PC-9 (cell line): ENCODE measurements at regions of chr11 and their contacts with region 1.

Region 1: DNA sequence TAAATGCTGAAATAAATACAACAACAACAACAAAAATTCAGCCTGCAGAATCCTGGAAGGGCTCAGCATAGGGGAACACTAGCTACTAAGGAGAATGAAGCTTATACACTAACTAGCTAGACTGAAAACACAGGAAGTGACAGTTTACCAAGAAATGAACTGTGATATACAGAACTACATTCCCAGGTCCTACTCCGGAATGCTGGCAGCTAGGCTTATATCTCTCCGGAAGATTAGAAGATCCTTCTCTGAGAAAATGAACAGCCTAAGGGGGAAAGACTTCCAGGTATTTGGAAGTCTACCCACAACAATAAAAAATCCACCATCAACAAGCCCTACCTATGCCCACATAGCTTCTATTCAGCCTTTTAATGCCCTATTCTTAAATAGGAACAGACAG is 31.0 kb downstream of the CCDC34 start:
- DNase-seq: no peak
- H3K4me3 ChIP-seq: no peak overlapping the region
- H3K27ac ChIP-seq: no peak overlapping the region
- H3K4me1 ChIP-seq: no peaks in the 10 kb centered on the region
- H3K27me3 ChIP-seq: no peaks in the 10 kb centered on the region
- CTCF ChIP-seq: no peak

Region 2: DNA sequence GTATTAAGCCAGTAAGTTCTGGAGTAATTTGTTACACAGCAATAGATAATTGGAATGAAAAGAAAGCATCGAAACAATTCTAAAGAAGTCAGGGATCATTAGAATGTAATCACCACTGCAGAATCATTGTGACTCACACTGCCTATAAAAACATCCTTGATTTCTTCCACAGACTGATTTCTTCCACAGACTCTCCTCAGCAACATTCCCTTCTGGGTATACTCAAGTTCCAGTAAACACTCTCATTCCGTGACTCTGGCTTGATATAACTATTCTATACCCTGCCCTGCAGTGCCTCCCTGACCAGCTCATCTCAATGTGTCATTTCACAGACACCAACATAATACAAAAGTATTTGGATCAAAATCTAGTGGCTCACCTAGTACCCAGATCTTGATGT is 170.9 kb before region 1 on chr11:
- CTCF ChIA-PET with region 1: no interaction called
- POLR2A ChIA-PET with region 1: no interaction called
- intact Hi-C with region 1: no loop called
- DNase-seq: no peak
- H3K4me3 ChIP-seq: no peak overlapping the region
- H3K27ac ChIP-seq: no peak overlapping the region
- H3K4me1 ChIP-seq: no peaks in the 10 kb centered on the region
- H3K27me3 ChIP-seq: no peaks in the 10 kb centered on the region
- CTCF ChIP-seq: no peak

Region 3: DNA sequence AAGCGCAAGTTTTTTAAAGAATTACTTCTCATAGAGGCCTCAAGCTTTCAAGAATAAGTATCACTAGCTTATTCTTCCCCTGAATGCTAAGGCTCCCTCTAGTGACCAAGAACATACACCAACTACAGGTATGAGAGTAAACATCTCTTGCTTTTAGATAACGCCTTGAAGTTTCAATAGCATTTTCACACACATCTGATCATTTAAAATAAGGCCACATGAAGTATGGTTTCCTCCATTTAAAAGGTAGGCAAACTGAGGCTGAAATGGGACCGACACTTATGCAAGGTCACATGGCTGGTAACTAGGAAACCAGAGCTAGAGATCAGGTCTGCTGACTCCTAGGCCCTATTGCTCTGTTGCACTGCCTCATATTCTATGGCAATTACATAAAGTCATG is 35.5 kb before region 1 on chr11:
- CTCF ChIA-PET with region 1: no interaction called
- POLR2A ChIA-PET with region 1: interaction called, 12 read pairs
- intact Hi-C with region 1: no loop called
- DNase-seq: peak in 1 of 2 experiments; percentile 4
- H3K4me3 ChIP-seq: no peak overlapping the region
- H3K27ac ChIP-seq: no peak overlapping the region
- H3K4me1 ChIP-seq: no peaks in the 10 kb centered on the region
- H3K27me3 ChIP-seq: no peaks in the 10 kb centered on the region
- CTCF ChIP-seq: peak; percentile 74